ENCODE measurements at regions of chr6 and their contacts with region 1.

Region 1: GRCh38 chr6:158002951-158003853 is 21.5 kb downstream of the SYNJ2 start:
- DNase-seq: peak; percentile 68
- H3K4me3 Mint-ChIP-seq: peak overlapping the region; percentile 17
- H3K27ac Mint-ChIP-seq: peak overlapping the region; percentile 74
- H3K4me1 Mint-ChIP-seq: peaks cover 40% of the 10 kb centered on the region
- H3K27me3 Mint-ChIP-seq: no peaks in the 10 kb centered on the region

Region 2: DNA sequence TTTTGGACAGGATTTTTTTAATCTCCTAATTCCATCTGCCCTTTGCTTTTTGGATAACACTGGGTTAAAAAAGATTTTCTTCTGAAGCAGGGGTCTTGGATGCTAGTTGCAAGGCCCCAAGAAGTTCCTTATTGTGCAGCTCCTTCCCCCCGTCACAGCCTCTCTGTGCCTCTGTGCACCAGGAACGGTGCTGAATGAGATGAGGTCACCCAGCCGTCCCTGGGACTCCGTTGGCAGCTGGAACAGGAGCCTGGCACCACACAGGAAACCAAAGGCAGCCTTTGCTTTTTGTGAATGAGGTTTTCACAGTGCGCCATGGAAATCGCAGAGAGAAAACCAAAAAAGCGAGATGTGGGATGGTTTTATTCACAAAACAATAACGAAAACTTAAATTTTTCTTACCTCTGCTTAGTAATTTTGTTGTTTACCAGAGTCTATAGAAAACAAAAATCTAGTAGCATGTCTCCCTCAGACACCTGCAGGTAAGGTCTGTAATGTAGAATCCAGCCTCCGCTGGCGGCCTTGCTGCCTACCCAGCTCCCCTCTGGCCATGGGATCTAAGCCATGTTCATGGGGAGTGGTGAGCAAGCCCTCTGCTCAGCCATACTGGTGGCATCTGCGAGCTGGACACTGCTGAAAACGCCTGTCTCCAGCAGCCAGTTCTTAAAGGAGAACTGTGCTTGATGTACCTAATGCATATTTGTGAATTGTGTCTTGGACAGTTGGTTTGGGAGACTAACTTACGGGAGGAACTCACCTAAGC is 61.9 kb before region 1 on chr6:
- intact Hi-C with region 1: loop called (anchors 2 kb)
- DNase-seq: peak; percentile 52
- H3K4me3 Mint-ChIP-seq: no peak overlapping the region
- H3K27ac Mint-ChIP-seq: no peak overlapping the region
- H3K4me1 Mint-ChIP-seq: peaks cover 25% of the 10 kb centered on the region
- H3K27me3 Mint-ChIP-seq: no peaks in the 10 kb centered on the region

Region 3: GRCh38 chr6:158039571-158040050 is 36.4 kb after region 1 on chr6:
- intact Hi-C with region 1: loop called (anchors 5 kb)
- DNase-seq: peak; percentile 73
- H3K4me3 Mint-ChIP-seq: peak overlapping the region; percentile 13
- H3K27ac Mint-ChIP-seq: no peak overlapping the region
- H3K4me1 Mint-ChIP-seq: peaks cover 35% of the 10 kb centered on the region
- H3K27me3 Mint-ChIP-seq: no peaks in the 10 kb centered on the region